MCF 10A (cell line): ENCODE measurements at regions of chr6 and their contacts with region 1.

Region 1: DNA sequence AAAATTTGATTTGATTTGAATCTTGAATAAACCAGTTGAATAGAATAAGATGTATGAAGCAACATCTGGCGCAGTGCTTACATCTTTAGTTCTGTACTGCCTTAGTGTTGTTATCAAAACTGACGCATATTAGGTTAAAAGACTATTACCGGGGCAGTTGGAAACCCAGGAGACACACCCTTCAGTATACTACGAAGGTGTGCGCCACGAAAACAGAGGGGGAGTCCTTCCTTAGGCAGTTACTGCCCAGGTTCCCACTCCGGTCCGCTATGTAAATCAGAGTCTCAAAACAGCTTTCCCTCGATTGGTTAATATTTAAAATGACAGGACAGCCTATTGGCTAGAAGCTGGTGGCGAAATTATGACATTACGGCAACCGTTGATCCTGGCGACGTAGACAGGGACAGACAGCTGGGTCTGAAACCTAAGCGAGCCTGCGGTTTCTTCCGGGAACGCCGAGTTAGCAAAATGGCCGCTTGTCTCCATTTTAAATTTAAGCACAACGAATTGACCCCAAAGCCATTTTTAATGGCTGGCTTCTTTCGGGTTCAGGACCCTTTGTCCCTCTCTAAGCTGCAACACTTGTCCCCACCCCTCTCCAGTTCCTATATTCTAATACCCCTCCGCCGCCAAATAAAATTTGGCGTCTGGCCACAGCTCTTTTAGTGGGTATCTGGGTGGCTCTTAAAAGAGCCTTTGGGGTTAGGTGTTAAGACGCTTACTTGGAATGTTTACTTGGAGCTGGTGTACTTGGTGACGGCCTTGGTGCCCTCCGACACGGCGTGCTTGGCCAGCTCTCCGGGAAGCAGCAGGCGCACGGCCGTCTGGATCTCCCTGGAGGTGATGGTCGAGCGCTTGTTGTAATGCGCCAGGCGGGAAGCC is 35.8 kb downstream of the HFE start:
- DNase-seq: peak; percentile 99
- H3K4me3 Mint-ChIP-seq: peak overlapping the region; percentile 98
- H3K27ac Mint-ChIP-seq: peak overlapping the region; percentile 99
- H3K4me1 Mint-ChIP-seq: peaks cover 14% of the 10 kb centered on the region
- H3K27me3 Mint-ChIP-seq: no peaks in the 10 kb centered on the region
- CTCF ChIP-seq: no peak

Region 2: DNA sequence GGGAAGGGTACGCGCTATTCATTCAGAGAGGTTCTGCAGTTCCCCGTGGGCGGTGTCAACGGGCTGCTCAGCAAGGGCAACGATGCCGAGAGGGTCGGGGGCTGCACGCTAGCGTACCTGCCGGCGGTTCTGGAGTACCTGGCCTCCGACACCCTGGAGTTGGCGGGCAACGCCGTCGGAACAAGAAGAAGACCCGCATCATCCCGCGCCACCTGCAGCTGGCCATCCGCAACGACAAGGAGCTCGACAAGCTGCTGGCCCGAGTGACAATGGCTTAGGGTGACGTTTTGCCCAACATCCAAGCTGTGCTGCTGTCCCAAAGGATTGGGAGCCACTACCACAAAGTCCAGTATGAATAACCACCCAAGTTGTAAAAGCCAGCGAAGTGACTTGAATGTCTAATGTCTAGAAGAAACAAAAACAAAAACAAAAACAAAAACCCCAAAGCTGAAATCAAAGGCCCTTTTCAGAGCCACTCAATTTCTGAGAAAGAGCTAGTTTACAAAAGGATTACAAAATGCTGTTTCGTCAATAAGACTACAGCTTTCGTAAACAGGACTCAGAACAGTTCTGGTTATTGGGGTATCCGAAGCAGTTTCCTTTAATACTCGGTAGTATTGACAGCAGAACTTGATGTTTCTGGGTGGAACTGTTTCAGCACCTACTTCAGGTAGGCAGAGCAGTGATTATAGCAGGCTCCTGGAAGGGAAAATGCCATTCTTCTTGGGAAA is 390.4 kb before region 1 on chr6:
- CTCF ChIA-PET with region 1: no interaction called
- POLR2A ChIA-PET with region 1: no interaction called
- intact Hi-C with region 1: no loop called
- DNase-seq: no peak
- H3K4me3 Mint-ChIP-seq: no peak overlapping the region
- H3K27ac Mint-ChIP-seq: no peak overlapping the region
- H3K4me1 Mint-ChIP-seq: no peaks in the 10 kb centered on the region
- H3K27me3 Mint-ChIP-seq: peaks cover 50% of the 10 kb centered on the region
- CTCF ChIP-seq: no peak

Region 3: DNA sequence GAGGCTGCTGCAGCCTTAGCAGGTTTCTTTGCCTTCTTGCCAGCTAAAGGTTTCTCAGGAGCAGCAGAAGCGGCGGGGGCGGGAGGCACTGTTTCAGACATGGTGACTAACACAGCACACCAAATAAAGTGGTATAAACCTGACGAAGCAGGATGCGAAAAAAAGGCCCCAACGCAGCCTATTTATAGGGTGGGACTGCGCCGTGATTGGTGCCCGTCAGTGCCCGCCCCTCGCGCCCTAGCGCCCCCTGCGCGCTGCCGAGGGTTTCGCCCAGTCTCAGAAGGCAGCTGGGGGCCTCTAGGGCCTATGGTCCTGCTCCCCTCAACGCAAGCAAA is 105.4 kb before region 1 on chr6:
- CTCF ChIA-PET with region 1: interaction called, 4 read pairs
- POLR2A ChIA-PET with region 1: interaction called, 65 read pairs
- intact Hi-C with region 1: no loop called
- DNase-seq: peak; percentile 93
- H3K4me3 Mint-ChIP-seq: peak overlapping the region; percentile 75
- H3K27ac Mint-ChIP-seq: peak overlapping the region; percentile 73
- H3K4me1 Mint-ChIP-seq: no peaks in the 10 kb centered on the region
- H3K27me3 Mint-ChIP-seq: no peaks in the 10 kb centered on the region
- CTCF ChIP-seq: peak; percentile 26

Region 4: GRCh38 chr6:26065952-26066380 is 57.1 kb before region 1 on chr6:
- CTCF ChIA-PET with region 1: no interaction called
- POLR2A ChIA-PET with region 1: interaction called, 47 read pairs
- intact Hi-C with region 1: no loop called
- DNase-seq: peak; percentile 87
- H3K4me3 Mint-ChIP-seq: no peak overlapping the region
- H3K27ac Mint-ChIP-seq: peak overlapping the region; percentile 23
- H3K4me1 Mint-ChIP-seq: no peaks in the 10 kb centered on the region
- H3K27me3 Mint-ChIP-seq: no peaks in the 10 kb centered on the region
- CTCF ChIP-seq: peak; percentile 81

Region 5: GRCh38 chr6:26156076-26156849 is 33.2 kb after region 1 on chr6:
- CTCF ChIA-PET with region 1: interaction called, 5 read pairs
- POLR2A ChIA-PET with region 1: interaction called, 1,660 read pairs
- intact Hi-C with region 1: loop called (anchors 1 kb)
- DNase-seq: peak; percentile 91
- H3K4me3 Mint-ChIP-seq: peak overlapping the region; percentile 82
- H3K27ac Mint-ChIP-seq: peak overlapping the region; percentile 64
- H3K4me1 Mint-ChIP-seq: peaks cover 23% of the 10 kb centered on the region
- H3K27me3 Mint-ChIP-seq: no peaks in the 10 kb centered on the region
- CTCF ChIP-seq: no peak

Region 6: GRCh38 chr6:26204332-26205165 is 81.5 kb after region 1 on chr6:
- CTCF ChIA-PET with region 1: interaction called, 4 read pairs
- POLR2A ChIA-PET with region 1: interaction called, 728 read pairs
- intact Hi-C with region 1: loop called (anchors 1 kb)
- DNase-seq: peak; percentile 98
- H3K4me3 Mint-ChIP-seq: no peak overlapping the region
- H3K27ac Mint-ChIP-seq: no peak overlapping the region
- H3K4me1 Mint-ChIP-seq: peaks cover 3% of the 10 kb centered on the region
- H3K27me3 Mint-ChIP-seq: no peaks in the 10 kb centered on the region
- CTCF ChIP-seq: no peak

Region 7: GRCh38 chr6:26285143-26286134 is 162.4 kb after region 1 on chr6:
- CTCF ChIA-PET with region 1: no interaction called
- POLR2A ChIA-PET with region 1: interaction called, 25 read pairs
- intact Hi-C with region 1: no loop called
- DNase-seq: peak; percentile 100
- H3K4me3 Mint-ChIP-seq: peak overlapping the region; percentile 91
- H3K27ac Mint-ChIP-seq: peak overlapping the region; percentile 92
- H3K4me1 Mint-ChIP-seq: peaks cover 10% of the 10 kb centered on the region
- H3K27me3 Mint-ChIP-seq: no peaks in the 10 kb centered on the region
- CTCF ChIP-seq: no peak

Region 8: GRCh38 chr6:27838058-27838944 is 1715.3 kb after region 1 on chr6:
- CTCF ChIA-PET with region 1: no interaction called
- POLR2A ChIA-PET with region 1: interaction called, 111 read pairs
- intact Hi-C with region 1: no loop called
- DNase-seq: peak; percentile 98
- H3K4me3 Mint-ChIP-seq: no peak overlapping the region
- H3K27ac Mint-ChIP-seq: no peak overlapping the region
- H3K4me1 Mint-ChIP-seq: peaks cover 32% of the 10 kb centered on the region
- H3K27me3 Mint-ChIP-seq: no peaks in the 10 kb centered on the region
- CTCF ChIP-seq: no peak